ENCODE measurements at regions of chr9 and their contacts with region 1.

Region 1: DNA sequence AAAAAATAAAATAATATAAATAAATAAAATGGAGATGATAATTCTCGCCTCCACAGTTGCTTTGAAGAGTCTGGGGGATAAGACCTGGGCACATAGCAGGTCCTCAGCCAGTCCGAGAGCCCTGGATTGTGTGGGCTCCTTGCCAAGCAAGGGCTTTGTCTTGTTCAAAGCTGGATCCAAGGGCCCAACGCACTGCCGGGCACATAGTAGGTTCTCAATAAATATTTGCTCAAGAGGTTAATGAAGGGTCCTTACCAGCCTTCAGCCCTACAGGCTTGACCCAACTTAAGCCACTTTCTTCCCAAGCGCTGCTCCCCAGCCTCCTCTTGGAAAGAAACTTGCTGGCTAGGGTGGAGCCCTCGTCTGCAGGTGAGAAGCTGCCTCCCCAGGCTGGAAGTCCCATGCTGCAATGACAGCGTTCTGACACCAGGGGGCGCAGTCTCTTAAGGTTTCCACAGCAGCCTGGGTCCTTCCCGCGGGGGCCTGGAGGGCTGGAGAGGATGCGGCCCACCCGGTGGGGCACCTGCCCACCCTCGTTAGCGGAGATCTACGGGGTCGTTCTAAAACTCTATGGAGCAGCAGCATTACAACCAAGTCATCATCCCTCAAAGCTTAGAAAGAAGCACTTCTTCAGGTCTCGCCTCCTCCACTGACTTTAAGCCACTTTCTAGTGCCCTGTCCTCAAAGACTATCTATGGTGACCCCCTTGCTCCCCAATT is 115.2 kb downstream of the LHX2 start:
- DNase-seq: peak; percentile 78 to 84
- H3K4me3 ChIP-seq: no peak overlapping the region
- H3K4me3 Mint-ChIP-seq: no peak overlapping the region
- H3K27ac Mint-ChIP-seq: no peak overlapping the region
- H3K4me1 ChIP-seq: peaks cover 21% of the 10 kb centered on the region
- H3K4me1 Mint-ChIP-seq: peaks cover 14% of the 10 kb centered on the region
- H3K27me3 ChIP-seq: no peaks in the 10 kb centered on the region
- H3K27me3 Mint-ChIP-seq: no peaks in the 10 kb centered on the region
- CTCF ChIP-seq: peak; percentile 92 to 99

Region 2: DNA sequence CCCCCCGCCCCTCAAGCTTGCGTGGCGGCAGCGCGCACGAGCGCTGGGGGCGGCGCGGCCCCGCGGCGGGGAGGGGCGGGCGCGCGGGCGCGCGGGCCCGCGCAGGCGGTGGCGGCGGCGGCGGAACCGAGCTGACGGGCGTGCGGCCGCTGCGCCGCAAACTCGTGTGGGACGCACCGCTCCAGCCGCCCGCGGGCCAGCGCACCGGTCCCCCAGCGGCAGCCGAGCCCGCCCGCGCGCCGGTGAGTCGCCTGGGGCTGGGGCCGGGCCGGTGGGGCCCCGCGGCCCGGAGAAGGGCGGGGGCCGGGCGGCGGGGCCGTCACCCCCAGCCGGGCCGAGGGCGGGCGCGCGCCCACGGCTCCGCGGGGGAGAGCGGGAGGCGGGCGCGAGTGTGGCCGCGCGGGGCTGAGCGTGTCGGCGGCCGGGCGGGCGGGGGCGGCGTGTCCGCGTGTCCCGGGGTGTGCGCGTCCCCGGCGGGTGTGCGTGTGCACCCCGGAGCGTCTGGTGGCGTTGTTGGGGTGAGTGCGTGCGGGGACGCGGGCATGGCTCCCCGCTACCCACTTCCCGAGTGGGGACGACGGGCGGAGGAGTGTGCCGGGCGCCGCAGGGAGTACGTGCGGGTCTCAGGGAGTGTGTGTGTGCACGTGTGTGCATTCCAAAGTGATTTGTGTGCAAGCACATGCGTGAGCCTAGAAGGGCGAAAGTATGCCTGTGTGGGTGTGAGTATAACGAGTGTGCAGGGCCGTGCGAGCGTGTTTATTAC is 131.3 kb after region 1 on chr9 and contains the start of gene NEK6:
- CTCF ChIA-PET with region 1: interaction called, 3 read pairs
- POLR2A ChIA-PET with region 1: no interaction called
- intact Hi-C with region 1: loop called (anchors 10 kb)
- DNase-seq: peak in 1 of 2 experiments; percentile 42
- H3K4me3 ChIP-seq: peak within 1 kb of the TSS; percentile 83
- H3K4me3 Mint-ChIP-seq: peak within 1 kb of the TSS; percentile 98
- H3K27ac Mint-ChIP-seq: peak within 1 kb of the TSS; percentile 96
- H3K4me1 ChIP-seq: peaks cover 32% of the 10 kb centered on the region
- H3K4me1 Mint-ChIP-seq: peaks cover 31% of the 10 kb centered on the region
- H3K27me3 ChIP-seq: no peaks in the 10 kb centered on the region
- H3K27me3 Mint-ChIP-seq: no peaks in the 10 kb centered on the region
- CTCF ChIP-seq: no peak
- total RNA-seq, gene NEK6: 56.6 and 66.6 TPM in 2 replicates

Region 3: DNA sequence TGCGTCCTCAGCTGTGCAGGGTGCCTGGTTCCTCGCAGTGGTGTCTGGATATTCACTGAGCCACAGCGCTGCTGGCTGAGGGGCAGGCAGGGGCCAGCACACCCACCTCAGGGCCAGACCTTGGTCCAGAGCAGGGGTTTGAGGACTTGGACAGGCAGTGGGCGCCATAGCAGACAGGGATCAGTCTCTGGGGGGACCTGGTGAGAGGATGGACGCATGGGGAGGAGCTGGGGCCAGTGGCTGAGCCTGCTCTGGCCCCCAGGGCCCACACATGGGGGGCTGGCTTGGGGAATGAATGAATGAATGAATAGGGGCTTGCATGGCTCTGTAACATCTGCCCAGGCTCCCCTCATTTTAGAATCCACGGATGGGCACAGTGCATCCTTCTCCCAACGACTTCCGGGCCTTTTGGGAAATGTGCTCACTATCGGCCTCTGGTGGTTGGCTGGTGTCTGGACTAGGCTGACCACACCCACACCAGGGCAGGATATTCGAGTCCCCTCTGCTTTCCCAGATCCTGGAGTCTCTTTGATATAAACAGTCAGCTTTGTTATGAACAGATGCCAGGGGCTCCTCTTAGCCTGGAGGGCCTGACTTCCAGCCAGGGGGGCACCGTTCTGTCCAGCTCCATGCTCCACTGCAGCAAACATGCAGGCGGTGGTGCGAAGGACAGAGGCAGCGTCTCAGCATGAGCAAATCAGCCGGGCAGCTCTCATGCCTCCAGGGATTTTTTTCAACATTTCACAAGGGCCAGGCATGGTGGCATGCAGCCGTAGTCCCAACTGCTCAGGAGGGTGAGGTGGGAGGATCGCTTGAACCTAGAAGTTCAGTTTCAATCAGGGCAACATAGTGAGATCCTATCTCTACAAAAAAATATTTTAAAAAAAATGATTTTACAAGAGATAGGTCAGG is 193.6 kb after region 1 on chr9:
- CTCF ChIA-PET with region 1: interaction called, 6 read pairs
- POLR2A ChIA-PET with region 1: no interaction called
- intact Hi-C with region 1: loop called (anchors 1 kb)
- DNase-seq: peak; percentile 76 to 80
- H3K4me3 ChIP-seq: no peak overlapping the region
- H3K4me3 Mint-ChIP-seq: no peak overlapping the region
- H3K27ac Mint-ChIP-seq: no peak overlapping the region
- H3K4me1 ChIP-seq: no peaks in the 10 kb centered on the region
- H3K4me1 Mint-ChIP-seq: no peaks in the 10 kb centered on the region
- H3K27me3 ChIP-seq: no peaks in the 10 kb centered on the region
- H3K27me3 Mint-ChIP-seq: no peaks in the 10 kb centered on the region
- CTCF ChIP-seq: peak; percentile 84 to 91

Region 4: DNA sequence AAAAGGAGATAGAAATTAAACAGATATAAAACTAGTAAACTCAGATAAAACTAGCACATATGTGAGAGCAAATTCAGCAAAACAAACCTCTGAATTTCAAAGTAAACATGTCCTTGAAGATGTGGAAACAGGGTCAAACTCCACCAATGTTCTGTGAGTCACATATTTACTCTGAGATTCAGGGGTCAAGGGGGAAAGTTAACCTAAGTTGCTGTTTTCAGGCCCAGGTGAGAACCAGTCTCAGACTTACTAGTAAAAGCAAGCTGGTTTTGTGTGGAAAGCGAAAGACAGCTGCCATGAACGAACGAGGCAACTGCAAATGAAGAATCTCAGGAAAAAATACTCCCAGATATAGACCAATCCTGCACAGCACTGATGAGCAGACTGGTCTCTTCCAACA is 259.5 kb after region 1 on chr9:
- CTCF ChIA-PET with region 1: no interaction called
- POLR2A ChIA-PET with region 1: no interaction called
- intact Hi-C with region 1: loop called (anchors 2 kb)
- DNase-seq: peak; percentile 66 to 72
- H3K4me3 ChIP-seq: 0 out of 2 replicates have a peak overlapping the region, but pooled peaks have one; percentile 12
- H3K4me3 Mint-ChIP-seq: peak overlapping the region; percentile 23
- H3K27ac Mint-ChIP-seq: no peak overlapping the region
- H3K4me1 ChIP-seq: peaks cover 46% of the 10 kb centered on the region
- H3K4me1 Mint-ChIP-seq: peaks cover 47% of the 10 kb centered on the region
- H3K27me3 ChIP-seq: no peaks in the 10 kb centered on the region
- H3K27me3 Mint-ChIP-seq: no peaks in the 10 kb centered on the region
- CTCF ChIP-seq: no peak